Common myeloid progenitor, CD34-positive (primary cell): ENCODE measurements at regions of chr1 and their contacts with region 1.

Region 1: DNA sequence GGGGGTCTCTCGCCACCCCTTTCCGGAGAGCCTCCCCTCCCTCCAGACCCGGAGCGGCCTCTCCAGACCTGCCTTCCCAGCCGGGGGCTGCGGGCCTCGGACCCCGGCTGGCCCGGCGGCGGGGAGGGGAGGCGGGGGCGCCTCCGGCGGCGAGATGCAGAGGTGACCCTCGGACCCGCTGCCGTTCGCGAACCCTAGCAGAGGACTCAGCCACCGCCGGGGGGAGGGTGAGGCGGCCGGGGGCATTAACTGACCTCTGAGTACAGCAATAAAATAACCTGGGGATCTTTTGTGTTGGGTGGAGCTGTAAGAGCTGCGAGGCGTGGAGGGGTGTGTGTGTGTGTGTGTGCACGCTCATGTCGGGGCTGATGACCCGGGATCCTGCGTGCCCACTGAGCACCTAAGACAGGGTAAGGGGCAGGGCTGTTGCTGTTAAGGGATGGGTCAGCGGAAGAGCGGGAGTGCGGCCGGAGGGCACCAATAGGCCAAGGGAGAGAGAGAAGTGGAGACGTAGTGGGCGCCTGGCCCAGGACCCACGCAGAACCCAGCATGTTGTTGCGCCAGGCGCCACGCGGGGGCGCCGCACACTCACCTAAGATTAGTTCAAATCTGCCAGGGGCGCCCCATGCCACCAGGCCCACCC is 6.3 kb downstream of the HAPLN2 start:
- DNase-seq: peak; percentile 65 to 81 (median 71)
- H3K4me3 ChIP-seq: peak overlapping the region in 2 of 7 experiments; percentile 40 to 45
- H3K27ac ChIP-seq: no peak overlapping the region
- H3K4me1 ChIP-seq: peaks cover 0 to 22% (median 18%) of the 10 kb centered on the region in 4 experiments
- H3K27me3 ChIP-seq: peaks cover under 1 to 59% (median 22%) of the 10 kb centered on the region in 5 experiments

Region 2: DNA sequence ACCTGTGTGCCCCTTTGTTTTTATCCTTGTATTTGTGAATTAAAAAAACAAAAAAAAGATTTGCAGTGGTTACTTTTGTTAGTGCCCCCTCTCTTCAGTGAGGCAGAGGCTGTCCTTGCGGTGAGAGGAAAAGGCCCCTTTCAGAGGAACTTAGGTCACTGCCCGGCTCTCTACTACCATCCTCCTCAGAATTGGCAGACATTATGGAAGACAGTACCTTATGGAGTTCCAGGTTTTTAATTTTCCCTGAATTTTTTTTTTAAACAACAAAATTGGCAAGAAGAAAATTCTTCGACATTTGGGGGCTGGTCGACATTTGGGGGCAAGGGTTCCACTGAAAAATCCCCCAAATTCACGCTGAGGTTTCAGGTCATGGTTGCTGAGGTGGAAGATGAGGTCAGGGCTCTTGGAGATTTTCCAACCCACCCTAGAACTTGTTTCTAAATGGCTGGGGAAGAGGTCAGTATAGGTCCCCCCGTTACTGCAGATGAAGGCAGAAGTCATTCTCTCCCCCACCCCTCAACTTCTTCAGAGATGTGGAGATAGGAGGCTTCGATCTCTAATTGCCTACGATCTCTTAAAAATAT is 678.8 kb before region 1 on chr1:
- CTCF ChIA-PET with region 1: no interaction called
- POLR2A ChIA-PET with region 1: no interaction called
- DNase-seq: no peak
- H3K4me3 ChIP-seq: peak overlapping the region in 1 of 7 experiments; percentile 25
- H3K27ac ChIP-seq: peak overlapping the region in 1 of 2 experiments; percentile 61
- H3K4me1 ChIP-seq: peaks cover 2 to 38% (median 29%) of the 10 kb centered on the region in 4 experiments
- H3K27me3 ChIP-seq: no peaks in the 10 kb centered on the region

Region 3: GRCh38 chr1:156608036-156608674 is 17.4 kb before region 1 on chr1:
- CTCF ChIA-PET with region 1: interaction called, 35 read pairs
- POLR2A ChIA-PET with region 1: no interaction called
- DNase-seq: peak; percentile 80 to 88 (median 85)
- H3K4me3 ChIP-seq: no peak overlapping the region
- H3K27ac ChIP-seq: no peak overlapping the region
- H3K4me1 ChIP-seq: peaks cover 0 to 8% (median 3%) of the 10 kb centered on the region in 4 experiments
- H3K27me3 ChIP-seq: peaks cover 0 to 3% (median 0%) of the 10 kb centered on the region in 5 experiments

Region 4: GRCh38 chr1:156641761-156642264 is 16.3 kb after region 1 on chr1 and contains the start of gene BCAN:
- CTCF ChIA-PET with region 1: interaction called, 275 read pairs
- POLR2A ChIA-PET with region 1: interaction called, 3 read pairs
- DNase-seq: peak in 2 of 3 donors; percentile 44 to 48
- H3K4me3 ChIP-seq: peak within 1 kb of the TSS in 5 of 7 experiments; percentile 13 to 54 (median 40)
- H3K27ac ChIP-seq: no peak within 1 kb of the TSS
- H3K4me1 ChIP-seq: peaks cover 8 to 35% (median 34%) of the 10 kb centered on the region in 4 experiments
- H3K27me3 ChIP-seq: peaks cover 4 to 79% (median 44%) of the 10 kb centered on the region in 5 experiments

Region 5: DNA sequence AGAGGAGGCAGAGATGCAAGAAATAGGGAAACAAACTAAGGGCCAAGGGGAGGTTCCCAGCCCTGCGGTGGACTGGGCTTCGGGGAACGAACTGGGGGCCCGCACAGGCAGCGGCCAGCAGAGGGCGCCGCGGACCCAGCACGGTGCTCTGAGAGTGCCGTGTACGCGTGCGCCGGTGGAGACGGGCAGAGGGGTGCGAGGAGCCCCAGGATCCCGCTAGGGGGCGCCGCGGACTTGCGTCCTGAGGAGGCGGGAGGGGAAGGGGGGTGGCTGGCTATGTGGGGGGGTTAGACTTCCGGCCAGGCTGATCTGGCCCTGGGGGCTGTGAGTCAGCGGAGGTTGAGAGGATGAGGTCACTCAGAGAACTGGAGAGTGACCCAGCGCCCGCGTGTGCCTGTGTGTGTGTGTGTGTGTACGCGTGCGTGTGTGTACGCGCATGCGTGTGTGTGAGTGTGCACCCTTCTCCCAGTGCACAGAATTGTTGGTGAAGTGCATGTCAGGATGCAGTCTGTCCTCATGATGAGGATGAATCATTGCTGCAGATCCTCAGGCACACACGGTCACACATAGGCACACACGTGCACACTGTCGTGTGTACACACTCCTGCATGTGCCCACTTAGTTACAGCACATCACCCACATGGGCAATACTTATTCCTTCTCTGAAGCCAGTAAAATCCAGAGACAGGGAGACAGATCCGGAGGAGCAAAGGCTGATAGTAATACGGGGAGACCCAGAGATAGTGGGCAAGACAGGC is 34.6 kb after region 1 on chr1:
- CTCF ChIA-PET with region 1: interaction called, 268 read pairs
- POLR2A ChIA-PET with region 1: interaction called, 3 read pairs
- DNase-seq: peak; percentile 92 to 96 (median 95)
- H3K4me3 ChIP-seq: peak overlapping the region in 3 of 7 experiments; percentile 25 to 31 (median 26)
- H3K27ac ChIP-seq: peak overlapping the region in 1 of 2 experiments; percentile 81
- H3K4me1 ChIP-seq: peaks cover 3 to 87% (median 76%) of the 10 kb centered on the region in 4 experiments
- H3K27me3 ChIP-seq: peaks cover 0 to 26% (median 16%) of the 10 kb centered on the region in 5 experiments

Region 6: GRCh38 chr1:156670791-156671190 is 45.2 kb after region 1 on chr1:
- CTCF ChIA-PET with region 1: interaction called, 112 read pairs
- POLR2A ChIA-PET with region 1: no interaction called
- DNase-seq: no peak
- H3K4me3 ChIP-seq: no peak overlapping the region
- H3K27ac ChIP-seq: no peak overlapping the region
- H3K4me1 ChIP-seq: no peaks in the 10 kb centered on the region
- H3K27me3 ChIP-seq: peaks cover 0 to 44% (median 13%) of the 10 kb centered on the region in 5 experiments

Region 7: GRCh38 chr1:156677616-156678596 is 52.3 kb after region 1 on chr1:
- CTCF ChIA-PET with region 1: interaction called, 112 read pairs
- POLR2A ChIA-PET with region 1: interaction called, 4 read pairs
- DNase-seq: peak; percentile 67 to 73 (median 68)
- H3K4me3 ChIP-seq: peak overlapping the region in 2 of 7 experiments; percentile 20 to 24
- H3K27ac ChIP-seq: no peak overlapping the region
- H3K4me1 ChIP-seq: peaks cover 0 to 16% (median 12%) of the 10 kb centered on the region in 4 experiments
- H3K27me3 ChIP-seq: peaks cover 0 to 88% (median 33%) of the 10 kb centered on the region in 5 experiments

Region 8: GRCh38 chr1:156705918-156706656 is 80.5 kb after region 1 on chr1:
- CTCF ChIA-PET with region 1: interaction called, 14 read pairs
- POLR2A ChIA-PET with region 1: no interaction called
- DNase-seq: peak; percentile 50 to 75 (median 73)
- H3K4me3 ChIP-seq: peak overlapping the region in 6 of 7 experiments; percentile 19 to 70 (median 52)
- H3K27ac ChIP-seq: no peak overlapping the region
- H3K4me1 ChIP-seq: peaks cover 0 to 27% (median 21%) of the 10 kb centered on the region in 4 experiments
- H3K27me3 ChIP-seq: peaks cover 7 to 75% (median 30%) of the 10 kb centered on the region in 5 experiments